T-cell (primary cell): ENCODE measurements at regions of chr9 and their contacts with region 1.

Region 1: GRCh38 chr9:83688921-83689320 is 18.8 kb downstream of the UBQLN1 start:
- DNase-seq: no peak
- ATAC-seq: no peak
- H3K4me3 ChIP-seq: no peak overlapping the region
- H3K4me3 Mint-ChIP-seq: peak overlapping the region in 1 of 3 donors; percentile 53
- H3K27ac ChIP-seq: no peak overlapping the region
- H3K27ac Mint-ChIP-seq: no peak overlapping the region
- H3K4me1 ChIP-seq: peaks cover 13 to 14% of the 10 kb centered on the region in 2 experiments
- H3K4me1 Mint-ChIP-seq: peaks cover 72 to 78% (median 76%) of the 10 kb centered on the region in 3 donors
- H3K27me3 ChIP-seq: no peaks in the 10 kb centered on the region
- H3K27me3 Mint-ChIP-seq: no peaks in the 10 kb centered on the region

Region 2: DNA sequence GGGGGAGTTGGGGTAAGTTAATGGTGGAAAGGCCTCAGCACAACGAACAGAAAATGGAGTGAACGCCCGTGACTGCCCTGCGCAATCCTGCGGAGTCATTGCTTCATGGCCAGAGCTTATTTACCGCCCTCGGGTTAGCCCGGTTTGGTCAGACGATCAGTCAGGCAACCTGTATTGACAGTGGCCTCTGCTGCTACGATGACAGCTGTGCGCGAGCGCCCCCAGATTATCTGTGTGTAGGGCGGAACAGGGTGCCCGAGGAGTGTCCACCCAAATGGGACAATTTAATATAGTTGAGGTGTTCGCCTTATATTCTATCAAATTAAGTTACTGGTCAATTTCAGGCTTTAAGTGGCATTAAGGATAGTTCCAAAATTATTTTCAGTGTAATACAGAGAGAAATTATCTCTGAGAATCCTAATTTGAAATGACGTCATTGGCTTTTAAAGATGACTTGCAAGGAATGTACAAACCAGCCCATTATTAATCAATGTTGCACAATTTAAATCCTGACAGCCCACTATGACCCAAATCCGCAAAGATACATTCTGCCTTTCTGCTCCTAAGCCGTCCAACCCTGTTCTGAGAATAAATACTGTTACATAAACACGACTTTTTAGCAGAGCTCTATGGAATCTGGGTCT is 19.7 kb after region 1 on chr9:
- CTCF ChIA-PET with region 1: no interaction called
- POLR2A ChIA-PET with region 1: no interaction called
- DNase-seq: peak in 29 of 35 experiments; percentile 10 to 69 (median 37)
- ATAC-seq: peak; percentile 14 to 26 (median 20)
- H3K4me3 ChIP-seq: peak overlapping the region; percentile 93 to 97
- H3K4me3 Mint-ChIP-seq: peak overlapping the region; percentile 86 to 99 (median 95)
- H3K27ac ChIP-seq: peak overlapping the region; percentile 96
- H3K27ac Mint-ChIP-seq: peak overlapping the region; percentile 96 to 99
- H3K4me1 ChIP-seq: peaks cover 15 to 17% of the 10 kb centered on the region in 2 experiments
- H3K4me1 Mint-ChIP-seq: peaks cover 41 to 44% (median 42%) of the 10 kb centered on the region in 3 donors
- H3K27me3 ChIP-seq: no peaks in the 10 kb centered on the region
- H3K27me3 Mint-ChIP-seq: no peaks in the 10 kb centered on the region

Region 3: DNA sequence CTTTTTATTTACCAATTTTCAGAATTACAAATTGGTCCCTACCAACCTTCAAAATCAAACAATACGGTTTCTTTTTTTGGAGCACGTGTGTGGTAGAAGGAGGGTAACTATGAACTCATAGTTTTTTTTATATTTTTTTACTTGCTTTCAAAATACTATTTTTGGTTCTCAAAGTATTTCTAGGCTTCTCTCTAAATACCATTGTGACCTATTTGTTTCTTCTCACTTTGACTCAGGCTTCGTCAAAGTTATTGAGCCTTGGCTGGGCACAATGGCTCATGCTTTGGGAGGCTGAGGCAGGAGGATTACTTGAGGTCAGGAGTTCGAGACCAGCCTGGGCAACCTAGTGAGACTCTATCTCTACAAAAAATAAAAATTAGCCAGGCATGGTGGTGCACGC is 243.9 kb after region 1 on chr9:
- CTCF ChIA-PET with region 1: no interaction called
- POLR2A ChIA-PET with region 1: interaction called in 1 of 2 experiments, 19 read pairs
- DNase-seq: no peak
- ATAC-seq: no peak
- H3K4me3 ChIP-seq: no peak overlapping the region
- H3K4me3 Mint-ChIP-seq: no peak overlapping the region
- H3K27ac ChIP-seq: no peak overlapping the region
- H3K27ac Mint-ChIP-seq: no peak overlapping the region
- H3K4me1 ChIP-seq: peaks cover 0 to 6% of the 10 kb centered on the region in 2 experiments
- H3K4me1 Mint-ChIP-seq: peaks cover 10 to 11% (median 10%) of the 10 kb centered on the region in 3 donors
- H3K27me3 ChIP-seq: no peaks in the 10 kb centered on the region
- H3K27me3 Mint-ChIP-seq: no peaks in the 10 kb centered on the region